ENCODE measurements at regions of chr12 and their contacts with region 1.

Region 1: DNA sequence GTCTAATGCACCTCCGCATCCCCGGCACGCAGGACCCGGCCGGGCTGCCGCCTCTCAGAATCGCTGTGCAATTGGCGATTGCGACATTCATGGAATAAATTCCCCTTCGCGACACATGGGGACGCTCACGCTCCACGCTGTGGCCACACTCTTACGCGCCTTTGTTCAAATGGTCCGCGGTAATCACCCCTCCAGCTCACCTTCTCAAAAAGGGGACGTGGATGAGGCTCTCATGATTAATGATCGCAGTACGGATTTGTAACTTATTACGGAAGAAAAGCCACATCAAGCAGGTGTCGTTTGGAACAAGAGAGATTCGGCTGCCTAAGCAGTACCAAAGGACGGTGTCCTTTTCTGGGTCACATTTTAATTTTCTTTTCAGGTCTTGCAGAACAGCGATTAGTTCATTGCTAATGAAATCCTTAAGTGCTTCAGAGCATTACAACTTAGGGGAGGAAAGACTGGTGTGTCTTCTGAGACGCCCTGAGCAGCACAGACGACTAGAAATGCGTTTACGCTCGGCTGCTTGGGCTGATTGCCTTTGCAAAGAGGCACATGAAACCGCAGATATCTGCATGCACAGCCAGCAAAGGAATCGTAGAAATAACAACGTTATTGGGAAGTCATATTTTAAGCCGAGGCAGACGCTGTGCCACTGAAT is 37.3 kb upstream of the ADGRD1 start:
- DNase-seq: peak; percentile 53 to 76 (median 59)
- ATAC-seq: peak; percentile 76 to 90 (median 84)
- H3K4me3 ChIP-seq: peak overlapping the region in 5 of 12 donors; percentile 6 to 45 (median 34)
- H3K27ac ChIP-seq: peak overlapping the region in 1 of 12 donors; percentile 39
- H3K4me1 ChIP-seq: peaks cover 0 to 8% (median 0%) of the 10 kb centered on the region in 12 donors
- H3K27me3 ChIP-seq: peaks cover 0 to 12% (median 4%) of the 10 kb centered on the region in 9 donors
- CTCF ChIP-seq: peak; percentile 79 to 99 (median 95)
- POLR2A ChIP-seq: no peak

Region 2: DNA sequence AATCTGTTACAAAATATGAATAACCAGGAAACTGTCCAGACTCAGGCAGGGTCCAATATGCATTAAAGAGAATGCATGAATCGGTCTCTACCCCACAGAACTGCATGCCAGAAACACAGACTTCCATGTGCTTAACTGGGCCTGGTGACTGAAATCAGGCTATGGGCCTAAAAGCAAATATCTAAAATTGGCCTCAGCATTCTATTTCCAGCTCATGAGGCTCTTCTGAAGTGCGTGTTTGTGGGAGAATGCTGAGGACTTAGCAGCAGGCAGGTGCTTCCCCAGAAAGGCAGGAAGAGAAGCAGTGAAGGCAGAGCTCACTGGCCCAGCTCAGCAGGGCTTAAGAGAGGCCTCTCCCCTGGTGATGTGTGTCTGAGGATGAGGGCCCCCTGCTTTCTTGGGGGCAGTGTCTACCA is 85.8 kb after region 1 on chr12:
- intact Hi-C with region 1: loop called in 1 of 10 experiments (anchors 10 kb)
- DNase-seq: no peak
- ATAC-seq: peak; percentile 35 to 73 (median 50)
- H3K4me3 ChIP-seq: no peak overlapping the region
- H3K27ac ChIP-seq: peak overlapping the region in 10 of 12 donors; percentile 58 to 86 (median 74)
- H3K4me1 ChIP-seq: peaks cover 0 to 35% (median 9%) of the 10 kb centered on the region in 12 donors
- H3K27me3 ChIP-seq: no peaks in the 10 kb centered on the region
- CTCF ChIP-seq: no peak
- POLR2A ChIP-seq: no peak

Region 3: DNA sequence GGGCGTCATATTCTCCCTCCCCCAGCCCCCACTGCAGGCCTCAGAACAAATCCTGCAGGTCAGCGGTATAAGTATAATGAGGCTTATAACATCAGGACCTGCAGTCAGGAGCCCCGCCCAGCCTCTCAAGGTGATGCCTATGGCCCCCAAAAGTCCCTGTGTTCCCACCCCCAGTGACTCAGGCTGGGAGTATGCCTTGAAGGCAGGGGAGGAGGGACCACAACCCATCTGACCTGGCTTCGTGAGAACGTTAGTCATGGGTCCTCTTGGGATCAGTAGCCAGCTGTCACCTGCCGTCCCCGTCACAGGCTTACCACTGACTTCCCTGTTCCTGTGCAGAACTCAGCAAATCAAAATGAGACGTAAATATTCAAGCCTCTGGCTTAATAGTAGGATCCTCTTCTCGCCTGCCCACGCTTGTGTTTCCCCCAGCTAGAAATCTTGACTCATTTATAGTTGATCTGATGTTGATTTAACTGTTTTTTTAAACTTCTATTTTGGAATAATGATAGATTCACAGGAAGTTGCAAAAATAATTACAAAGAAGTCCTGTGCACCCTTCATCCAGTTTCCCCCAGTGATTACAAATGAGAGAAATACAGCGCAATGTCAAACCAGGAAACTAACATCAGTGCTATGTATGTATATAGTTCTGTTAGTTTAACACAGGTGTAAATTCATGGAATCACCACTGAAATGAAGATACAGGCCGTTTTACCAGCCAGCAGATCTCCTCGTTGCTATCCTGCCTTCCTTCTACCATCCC is 144.8 kb after region 1 on chr12:
- intact Hi-C with region 1: no loop called
- DNase-seq: peak in 2 of 5 donors; percentile 7
- ATAC-seq: no peak
- H3K4me3 ChIP-seq: no peak overlapping the region
- H3K27ac ChIP-seq: no peak overlapping the region
- H3K4me1 ChIP-seq: peaks cover 0 to 38% (median 13%) of the 10 kb centered on the region in 12 donors
- H3K27me3 ChIP-seq: no peaks in the 10 kb centered on the region
- CTCF ChIP-seq: no peak
- POLR2A ChIP-seq: no peak

Region 4: DNA sequence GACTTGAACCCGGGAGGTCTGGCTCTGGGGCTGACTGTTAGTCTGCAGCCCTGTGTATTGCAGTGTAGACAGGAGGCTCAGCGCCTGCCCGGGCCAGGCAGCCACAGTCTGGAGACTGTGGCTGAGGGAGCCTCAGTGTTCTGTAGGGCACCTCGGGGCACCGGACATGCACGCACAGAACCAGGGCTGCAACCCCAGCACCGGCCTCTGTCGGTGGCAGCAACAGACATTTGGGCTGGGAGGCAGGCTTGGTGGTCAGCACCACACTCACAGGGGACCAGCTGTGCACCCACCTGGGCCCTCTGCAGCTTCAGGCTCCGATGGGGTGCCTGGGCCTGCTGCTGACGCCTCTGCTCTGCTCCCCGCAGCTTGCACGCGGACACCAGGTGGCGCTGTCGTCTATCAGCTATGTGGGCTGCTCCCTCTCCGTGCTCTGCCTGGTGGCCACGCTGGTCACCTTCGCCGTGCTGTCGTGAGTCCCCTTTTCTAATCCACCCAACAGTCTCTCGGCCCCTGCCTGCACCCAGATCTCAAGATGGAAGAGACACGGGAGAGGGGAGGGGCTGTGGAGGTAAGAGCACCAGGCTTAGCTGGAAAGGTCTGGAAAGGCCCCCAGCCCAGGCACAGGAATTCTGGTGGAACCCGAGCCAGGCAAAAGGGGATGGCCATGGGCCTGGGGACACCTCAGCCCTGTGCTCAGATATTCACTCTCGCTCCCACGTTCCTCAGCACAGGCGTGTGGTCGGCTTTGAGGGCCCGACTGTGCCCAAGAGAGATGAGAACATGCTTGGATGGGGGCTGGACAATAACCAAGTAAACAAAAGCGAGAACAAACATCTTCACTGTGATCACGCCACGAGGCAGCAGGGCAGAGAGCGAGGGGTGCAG is 188.3 kb after region 1 on chr12:
- intact Hi-C with region 1: loop called in 5 of 10 experiments (anchors 5 to 10 kb)
- DNase-seq: peak; percentile 82 to 92 (median 87)
- ATAC-seq: peak; percentile 74 to 94 (median 85)
- H3K4me3 ChIP-seq: no peak overlapping the region
- H3K27ac ChIP-seq: peak overlapping the region in 4 of 12 donors; percentile 6 to 34 (median 10)
- H3K4me1 ChIP-seq: peaks cover 0 to 16% (median 8%) of the 10 kb centered on the region in 12 donors
- H3K27me3 ChIP-seq: no peaks in the 10 kb centered on the region
- CTCF ChIP-seq: peak; percentile 86 to 96 (median 92)
- POLR2A ChIP-seq: no peak

Region 5: DNA sequence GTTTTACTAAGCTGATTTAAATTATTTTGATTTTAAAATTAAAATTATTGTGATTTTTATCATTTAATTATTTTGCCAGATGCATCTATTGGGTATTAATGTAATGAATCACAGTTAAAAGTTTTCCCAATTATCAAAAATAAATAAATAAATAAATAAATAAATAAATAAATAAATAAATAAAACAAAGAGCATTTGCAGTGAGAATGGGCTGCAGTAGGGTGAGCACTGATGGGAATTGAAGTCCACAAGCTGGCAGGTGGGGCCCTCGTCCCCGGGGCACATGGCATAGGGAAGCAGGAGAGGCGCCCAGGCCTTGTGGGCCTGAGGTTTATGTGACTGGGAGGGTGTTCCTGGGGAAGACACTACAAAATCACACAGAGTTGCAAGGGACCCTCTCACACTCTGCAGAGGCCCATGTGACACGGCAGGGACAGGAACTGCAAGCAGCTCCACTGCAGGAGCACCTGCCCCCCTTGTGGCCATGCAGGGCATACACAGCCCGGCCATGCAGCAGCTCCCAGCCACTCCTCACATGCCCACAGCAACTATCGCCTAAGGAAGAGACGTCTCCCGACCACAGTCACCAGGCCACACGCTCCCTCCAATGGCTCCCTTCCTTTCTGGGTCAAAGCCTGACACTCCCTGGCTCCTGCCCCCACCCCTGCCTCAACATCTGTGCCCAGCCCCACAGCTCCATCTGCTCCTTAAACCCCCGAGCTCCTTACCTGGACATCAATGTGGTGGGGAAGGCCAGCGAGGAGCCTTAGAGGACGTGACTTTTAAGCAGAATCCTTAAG is 538.2 kb after region 1 on chr12:
- intact Hi-C with region 1: loop called in 5 of 10 experiments (anchors 5 to 10 kb)
- DNase-seq: peak in 1 of 5 donors; percentile 29
- ATAC-seq: peak in 3 of 4 donors; percentile 85 to 90 (median 86)
- H3K4me3 ChIP-seq: no peak overlapping the region
- H3K27ac ChIP-seq: no peak overlapping the region
- H3K4me1 ChIP-seq: no peaks in the 10 kb centered on the region
- H3K27me3 ChIP-seq: peaks cover 0 to 33% (median 3%) of the 10 kb centered on the region in 9 donors
- CTCF ChIP-seq: peak; percentile 16 to 69 (median 46)
- POLR2A ChIP-seq: no peak

Region 6: DNA sequence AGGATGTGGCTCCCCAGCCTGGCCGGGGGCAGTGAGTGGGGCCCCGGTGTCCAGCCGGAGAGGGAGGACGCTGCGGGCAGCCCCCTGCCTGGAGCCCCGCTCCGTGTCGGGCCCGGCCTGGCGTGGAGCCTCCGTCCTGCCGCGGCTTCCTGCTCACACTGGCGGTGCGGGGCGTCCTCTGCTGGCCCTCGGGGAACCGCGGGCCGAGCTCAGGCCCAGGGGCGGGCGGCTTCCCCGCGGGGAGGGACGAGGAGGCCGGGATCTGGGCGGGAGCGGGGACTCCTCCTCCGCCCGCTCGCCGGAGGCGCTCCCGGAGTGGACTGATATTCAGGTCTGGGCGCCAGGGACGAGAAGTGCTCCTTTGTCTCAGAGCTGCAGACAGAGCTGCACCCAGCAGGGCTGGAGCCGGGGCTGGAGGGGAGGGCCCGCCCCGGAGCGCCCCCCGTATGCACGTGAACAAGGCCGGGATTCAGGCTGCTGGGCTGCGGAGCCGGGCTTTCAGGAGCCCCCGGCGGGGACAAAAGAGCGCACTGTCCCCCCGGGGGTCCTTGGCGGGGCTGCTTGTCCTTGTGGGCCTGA is 914.0 kb after region 1 on chr12:
- intact Hi-C with region 1: loop called in 4 of 10 experiments (anchors 10 kb)
- DNase-seq: peak; percentile 80 to 92 (median 81)
- ATAC-seq: peak; percentile 59 to 91 (median 88)
- H3K4me3 ChIP-seq: peak overlapping the region; percentile 24 to 67 (median 55)
- H3K27ac ChIP-seq: peak overlapping the region in 11 of 12 donors; percentile 15 to 80 (median 50)
- H3K4me1 ChIP-seq: peaks cover 0 to 46% (median 19%) of the 10 kb centered on the region in 12 donors
- H3K27me3 ChIP-seq: peaks cover 6 to 83% (median 46%) of the 10 kb centered on the region in 9 donors
- CTCF ChIP-seq: peak; percentile 38 to 74 (median 62)
- POLR2A ChIP-seq: peak in 1 of 2 donors; percentile 22